ENCODE measurements at regions of chr21 and their contacts with region 1.

Region 1: DNA sequence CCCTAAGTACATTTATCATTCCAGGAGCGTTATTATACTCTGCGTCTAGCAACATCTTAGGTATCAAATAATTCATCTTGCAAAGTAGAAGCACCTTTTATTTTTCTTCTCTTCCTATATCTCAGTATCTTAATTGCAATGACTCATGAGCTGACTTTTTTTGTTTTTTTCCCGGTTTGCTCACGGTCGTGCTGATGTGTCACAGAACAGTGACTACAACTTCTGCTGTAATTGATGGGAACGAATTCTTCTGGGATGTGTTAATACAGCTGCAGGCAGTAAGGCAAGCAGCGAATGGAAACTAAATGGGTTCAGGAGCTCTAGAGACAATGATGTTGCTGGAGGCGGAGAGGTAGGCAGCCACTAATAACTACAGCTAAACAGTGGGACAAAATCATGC is 89.8 kb upstream of the TMPRSS15 start:
- DNase-seq: peak; percentile 28
- H3K4me3 ChIP-seq: no peak overlapping the region
- H3K27ac ChIP-seq: no peak overlapping the region
- H3K4me1 ChIP-seq: no peaks in the 10 kb centered on the region
- H3K27me3 ChIP-seq: no peaks in the 10 kb centered on the region
- CTCF ChIP-seq: no peak

Region 2: DNA sequence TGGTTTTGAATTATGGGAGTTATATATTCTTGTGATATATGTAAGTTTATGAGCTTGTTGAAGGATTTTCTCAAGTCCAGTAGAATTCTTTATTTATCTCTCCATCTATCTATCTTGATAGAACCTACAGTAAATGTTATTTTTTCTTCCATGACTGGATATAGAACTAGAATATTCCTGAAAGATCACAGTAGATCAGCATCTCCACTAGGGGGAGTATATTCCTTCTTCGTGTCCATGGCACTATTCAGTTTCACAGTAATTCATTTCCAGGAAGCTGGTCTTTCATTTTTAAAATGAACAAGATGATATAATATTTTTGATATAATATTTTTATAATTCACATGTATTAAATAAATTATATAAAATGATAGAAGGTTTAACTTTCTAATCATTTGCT is 108.7 kb before region 1 on chr21:
- CTCF ChIA-PET with region 1: no interaction called
- POLR2A ChIA-PET with region 1: no interaction called
- intact Hi-C with region 1: loop called (anchors 5 kb)
- DNase-seq: peak; percentile 51
- H3K4me3 ChIP-seq: no peak overlapping the region
- H3K27ac ChIP-seq: no peak overlapping the region
- H3K4me1 ChIP-seq: no peaks in the 10 kb centered on the region
- H3K27me3 ChIP-seq: no peaks in the 10 kb centered on the region
- CTCF ChIP-seq: peak; percentile 66

Region 3: DNA sequence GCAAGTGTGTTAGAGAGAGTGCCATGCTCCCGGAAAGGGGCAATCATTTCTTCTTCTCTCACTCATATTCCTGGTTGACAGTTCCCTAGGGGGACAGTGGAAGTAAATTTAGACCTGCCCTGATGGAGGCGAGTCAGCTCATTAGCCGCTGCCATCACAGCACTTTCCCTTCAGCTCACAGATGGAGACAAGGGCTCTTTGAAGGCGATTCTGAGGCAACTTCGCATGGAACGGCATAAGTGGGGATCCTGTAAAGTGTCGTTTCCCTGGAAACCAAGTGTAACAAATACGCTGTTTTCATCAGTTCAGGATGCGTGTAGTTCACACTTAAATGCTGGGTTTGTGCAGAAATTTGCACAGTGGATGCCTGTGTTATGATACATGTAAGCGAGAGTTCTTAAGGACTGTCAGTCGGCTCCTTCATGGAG is 24.6 kb after region 1 on chr21:
- CTCF ChIA-PET with region 1: no interaction called
- POLR2A ChIA-PET with region 1: no interaction called
- intact Hi-C with region 1: no loop called
- DNase-seq: no peak
- H3K4me3 ChIP-seq: no peak overlapping the region
- H3K27ac ChIP-seq: no peak overlapping the region
- H3K4me1 ChIP-seq: no peaks in the 10 kb centered on the region
- H3K27me3 ChIP-seq: no peaks in the 10 kb centered on the region
- CTCF ChIP-seq: no peak